Naive thymus-derived CD4-positive, alpha-beta T cell (primary cell): ENCODE measurements at regions of chr7 and their contacts with region 1.

Region 1: GRCh38 chr7:55951637-55952351 is at the start of gene MRPS17:
- DNase-seq: peak; percentile 86 to 96 (median 94)
- ATAC-seq: peak; percentile 100
- H3K4me3 ChIP-seq: peak within 1 kb of the TSS; percentile 68
- H3K4me3 Mint-ChIP-seq: peak within 1 kb of the TSS; percentile 84 to 99 (median 96)
- H3K27ac ChIP-seq: peak within 1 kb of the TSS; percentile 86
- H3K27ac Mint-ChIP-seq: peak within 1 kb of the TSS; percentile 92 to 98 (median 96)
- H3K4me1 ChIP-seq: peaks cover 0 to 4% of the 10 kb centered on the region in 2 donors
- H3K4me1 Mint-ChIP-seq: peaks cover 10 to 33% (median 24%) of the 10 kb centered on the region in 7 donors
- H3K27me3 ChIP-seq: no peaks in the 10 kb centered on the region
- H3K27me3 Mint-ChIP-seq: peaks cover 0 to 2% (median 0%) of the 10 kb centered on the region in 5 donors
- total RNA-seq, gene MRPS17: 8.3 to 16.7 (median 12.0) TPM

Region 2: DNA sequence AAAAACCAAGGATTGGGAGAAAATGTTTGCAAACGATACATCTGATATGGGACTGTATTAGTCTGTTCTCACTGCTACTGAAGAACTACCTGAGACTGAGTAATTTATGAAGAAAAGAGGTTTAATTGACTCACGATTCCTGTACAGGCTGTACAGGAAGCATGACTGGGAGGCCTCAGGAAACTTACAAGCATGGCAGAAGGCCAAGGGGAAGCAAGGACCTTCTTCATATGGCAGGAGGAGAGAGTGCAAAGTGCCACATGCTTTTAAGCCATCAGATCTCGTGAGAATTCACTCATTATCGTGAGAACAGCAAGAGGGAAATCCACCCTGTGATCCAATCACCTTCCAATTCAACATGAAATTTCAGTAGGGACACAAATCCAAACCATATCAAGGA is 53.5 kb before region 1 on chr7:
- CTCF ChIA-PET with region 1: no interaction called
- POLR2A ChIA-PET with region 1: no interaction called
- intact Hi-C with region 1: no loop called
- DNase-seq: no peak
- ATAC-seq: no peak
- H3K4me3 ChIP-seq: no peak overlapping the region
- H3K4me3 Mint-ChIP-seq: no peak overlapping the region
- H3K27ac ChIP-seq: no peak overlapping the region
- H3K27ac Mint-ChIP-seq: no peak overlapping the region
- H3K4me1 ChIP-seq: no peaks in the 10 kb centered on the region
- H3K4me1 Mint-ChIP-seq: peaks cover 0 to 5% (median 0%) of the 10 kb centered on the region in 7 donors
- H3K27me3 ChIP-seq: no peaks in the 10 kb centered on the region
- H3K27me3 Mint-ChIP-seq: no peaks in the 10 kb centered on the region

Region 3: DNA sequence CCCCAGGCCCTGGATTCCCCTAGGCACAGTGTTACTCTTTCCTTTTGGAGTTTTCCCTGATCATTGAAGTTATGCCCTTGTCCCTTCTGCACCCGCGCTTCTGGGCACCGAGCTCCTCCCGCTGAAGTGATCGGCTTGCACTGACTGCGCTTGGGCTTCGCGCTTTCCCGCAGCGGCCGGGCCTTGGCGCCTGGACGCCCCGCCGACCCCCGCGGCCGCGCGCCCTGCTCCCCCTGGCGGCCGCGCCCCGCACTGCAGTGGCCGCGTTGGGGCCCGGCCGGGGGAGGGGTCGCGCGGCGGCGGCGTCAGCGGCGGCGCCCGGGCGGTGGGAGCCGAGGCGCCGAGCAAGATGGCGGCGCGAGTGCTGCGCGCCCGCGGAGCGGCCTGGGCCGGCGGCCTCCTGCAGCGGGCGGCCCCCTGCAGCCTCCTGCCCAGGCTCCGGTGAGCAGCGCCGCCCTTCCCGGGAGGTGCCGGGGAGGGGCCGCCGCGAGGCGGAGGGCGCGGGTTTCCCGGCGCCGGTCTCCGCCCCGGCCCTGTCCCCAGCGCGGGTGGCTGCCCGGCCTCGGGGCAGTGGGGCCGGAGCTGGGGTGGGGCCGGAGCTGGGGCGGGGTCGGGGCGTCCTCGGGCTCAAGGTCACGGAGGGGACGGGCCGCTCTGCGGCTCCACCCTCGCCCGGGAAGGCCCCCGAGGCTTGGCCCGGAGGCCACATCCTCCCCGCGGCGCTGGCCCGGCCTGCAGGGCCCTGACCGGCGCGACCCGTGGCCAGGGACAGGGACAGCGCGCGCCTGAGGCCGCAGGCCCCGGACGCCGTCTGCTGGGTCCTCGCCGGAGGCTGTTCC is 12.7 kb after region 1 on chr7 and contains the start of gene NIPSNAP2:
- CTCF ChIA-PET with region 1: interaction called, 10 read pairs
- POLR2A ChIA-PET with region 1: interaction called, 5 read pairs
- intact Hi-C with region 1: loop called (anchors 1 kb)
- DNase-seq: peak; percentile 37 to 86 (median 68)
- ATAC-seq: peak; percentile 94
- H3K4me3 ChIP-seq: peak within 1 kb of the TSS; percentile 50
- H3K4me3 Mint-ChIP-seq: peak within 1 kb of the TSS; percentile 79 to 91 (median 88)
- H3K27ac ChIP-seq: peak within 1 kb of the TSS; percentile 89
- H3K27ac Mint-ChIP-seq: peak within 1 kb of the TSS; percentile 89 to 94 (median 91)
- H3K4me1 ChIP-seq: peaks cover 10% of the 10 kb centered on the region in 2 donors
- H3K4me1 Mint-ChIP-seq: peaks cover 24 to 55% (median 42%) of the 10 kb centered on the region in 7 donors
- H3K27me3 ChIP-seq: no peaks in the 10 kb centered on the region
- H3K27me3 Mint-ChIP-seq: no peaks in the 10 kb centered on the region
- total RNA-seq, gene NIPSNAP2: 30.1 to 37.8 (median 34.4) TPM

Region 4: DNA sequence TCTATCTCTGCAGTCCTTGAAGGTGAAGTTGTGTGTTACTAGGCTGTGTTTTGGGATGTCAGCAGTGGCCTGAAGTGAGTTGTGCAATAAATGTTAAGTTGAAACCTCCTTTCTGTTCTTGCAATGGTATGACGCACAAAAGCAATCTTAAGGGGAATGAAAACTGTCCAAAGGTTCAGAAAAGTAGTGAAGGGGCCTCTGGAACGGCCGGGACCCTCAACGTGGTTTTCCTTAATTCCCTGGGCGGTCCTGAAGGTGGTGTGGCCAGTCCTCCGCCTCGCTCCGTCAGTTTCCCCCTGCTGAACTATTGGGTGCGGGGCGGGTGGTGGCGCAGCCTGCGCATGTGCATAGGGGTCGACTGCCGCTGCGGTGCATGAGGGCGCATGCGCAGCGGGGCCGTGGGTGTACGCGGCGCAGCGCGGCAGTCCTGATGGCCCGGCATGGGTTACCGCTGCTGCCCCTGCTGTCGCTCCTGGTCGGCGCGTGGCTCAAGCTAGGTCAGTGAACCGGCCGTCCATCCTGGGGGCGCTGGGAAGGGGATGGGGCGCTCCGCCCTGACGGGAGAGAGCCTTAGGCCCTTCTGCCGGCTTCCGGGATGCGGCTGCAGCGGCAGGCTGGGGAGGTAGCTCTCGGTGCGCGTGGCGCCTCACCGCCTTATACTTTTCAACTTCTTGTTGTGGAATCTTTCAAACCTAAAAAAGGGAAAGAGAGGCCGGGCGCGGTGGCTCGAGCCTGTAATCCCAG is 112.3 kb after region 1 on chr7 and contains the start of gene SUMF2:
- CTCF ChIA-PET with region 1: no interaction called
- POLR2A ChIA-PET with region 1: no interaction called
- intact Hi-C with region 1: loop called in 1 of 2 experiments (anchors 1 kb)
- DNase-seq: peak; percentile 86 to 96 (median 93)
- ATAC-seq: peak; percentile 96
- H3K4me3 ChIP-seq: peak within 1 kb of the TSS; percentile 98
- H3K4me3 Mint-ChIP-seq: peak within 1 kb of the TSS; percentile 83 to 95 (median 92)
- H3K27ac ChIP-seq: peak within 1 kb of the TSS; percentile 88
- H3K27ac Mint-ChIP-seq: peak within 1 kb of the TSS; percentile 93 to 98 (median 96)
- H3K4me1 ChIP-seq: peaks cover 7 to 8% of the 10 kb centered on the region in 2 donors
- H3K4me1 Mint-ChIP-seq: peaks cover 16 to 37% (median 22%) of the 10 kb centered on the region in 7 donors
- H3K27me3 ChIP-seq: no peaks in the 10 kb centered on the region
- H3K27me3 Mint-ChIP-seq: peaks cover 0 to 2% (median 0%) of the 10 kb centered on the region in 5 donors
- total RNA-seq, gene SUMF2: 120 to 176 (median 122) TPM

Region 5: DNA sequence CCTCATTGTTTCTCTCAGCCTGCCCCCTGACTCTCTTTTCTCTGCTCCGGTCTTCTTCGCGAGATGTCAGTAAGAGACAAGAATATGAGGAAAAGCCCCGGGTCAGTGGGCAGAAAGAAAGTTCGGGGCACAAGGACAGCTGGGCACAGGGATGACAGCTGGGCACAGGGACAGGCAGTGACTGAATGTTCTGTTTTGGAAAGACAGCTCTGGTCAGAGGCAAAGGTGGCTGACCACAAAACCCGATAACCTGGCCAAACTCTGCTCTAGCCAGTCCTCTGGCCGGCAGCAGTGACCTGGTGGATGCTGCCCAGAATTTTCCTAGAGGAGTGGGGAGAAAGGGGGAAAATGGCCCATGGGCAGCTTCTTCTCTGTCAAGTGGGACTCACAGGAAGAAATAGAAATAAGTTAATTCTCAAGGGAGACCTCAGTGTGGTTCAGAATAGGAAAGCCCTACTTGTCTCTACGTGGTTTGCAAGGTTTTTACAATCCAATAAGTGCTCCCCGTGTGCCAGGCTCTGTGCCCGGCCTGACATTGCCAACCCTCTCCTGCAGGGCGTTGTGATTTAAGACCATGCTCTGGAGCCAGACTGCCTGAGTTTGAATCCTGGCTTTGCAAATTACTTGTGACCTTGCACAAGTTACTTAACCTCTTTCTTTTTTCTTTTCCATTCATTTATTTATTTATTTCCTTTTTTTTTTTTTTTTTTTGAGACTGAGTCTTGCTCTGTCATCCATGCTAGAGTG is 1387.6 kb after region 1 on chr7:
- CTCF ChIA-PET with region 1: no interaction called
- POLR2A ChIA-PET with region 1: no interaction called
- intact Hi-C with region 1: no loop called
- DNase-seq: no peak
- ATAC-seq: no peak
- H3K4me3 ChIP-seq: no peak overlapping the region
- H3K4me3 Mint-ChIP-seq: peak overlapping the region in 1 of 10 donors; percentile 4
- H3K27ac ChIP-seq: no peak overlapping the region
- H3K27ac Mint-ChIP-seq: no peak overlapping the region
- H3K4me1 ChIP-seq: no peaks in the 10 kb centered on the region
- H3K4me1 Mint-ChIP-seq: no peaks in the 10 kb centered on the region
- H3K27me3 ChIP-seq: no peaks in the 10 kb centered on the region
- H3K27me3 Mint-ChIP-seq: no peaks in the 10 kb centered on the region